ENCODE measurements at regions of chr11 and their contacts with region 1.

Region 1: GRCh38 chr11:11977206-11977938 is 31.1 kb downstream of the DKK3 start:
- DNase-seq: peak; percentile 45
- ATAC-seq: peak; percentile 86
- H3K4me3 ChIP-seq: peak overlapping the region in 1 of 2 experiments; percentile 44; a peak in 3 of 4 replicates
- H3K27ac ChIP-seq: peak overlapping the region; percentile 60
- H3K4me1 ChIP-seq: peaks cover 25 to 44% of the 10 kb centered on the region in 2 experiments
- H3K27me3 ChIP-seq: no peaks in the 10 kb centered on the region
- CTCF ChIP-seq: no peak
- POLR2A ChIP-seq: no peak
- RAD21 ChIP-seq: no peak

Region 2: DNA sequence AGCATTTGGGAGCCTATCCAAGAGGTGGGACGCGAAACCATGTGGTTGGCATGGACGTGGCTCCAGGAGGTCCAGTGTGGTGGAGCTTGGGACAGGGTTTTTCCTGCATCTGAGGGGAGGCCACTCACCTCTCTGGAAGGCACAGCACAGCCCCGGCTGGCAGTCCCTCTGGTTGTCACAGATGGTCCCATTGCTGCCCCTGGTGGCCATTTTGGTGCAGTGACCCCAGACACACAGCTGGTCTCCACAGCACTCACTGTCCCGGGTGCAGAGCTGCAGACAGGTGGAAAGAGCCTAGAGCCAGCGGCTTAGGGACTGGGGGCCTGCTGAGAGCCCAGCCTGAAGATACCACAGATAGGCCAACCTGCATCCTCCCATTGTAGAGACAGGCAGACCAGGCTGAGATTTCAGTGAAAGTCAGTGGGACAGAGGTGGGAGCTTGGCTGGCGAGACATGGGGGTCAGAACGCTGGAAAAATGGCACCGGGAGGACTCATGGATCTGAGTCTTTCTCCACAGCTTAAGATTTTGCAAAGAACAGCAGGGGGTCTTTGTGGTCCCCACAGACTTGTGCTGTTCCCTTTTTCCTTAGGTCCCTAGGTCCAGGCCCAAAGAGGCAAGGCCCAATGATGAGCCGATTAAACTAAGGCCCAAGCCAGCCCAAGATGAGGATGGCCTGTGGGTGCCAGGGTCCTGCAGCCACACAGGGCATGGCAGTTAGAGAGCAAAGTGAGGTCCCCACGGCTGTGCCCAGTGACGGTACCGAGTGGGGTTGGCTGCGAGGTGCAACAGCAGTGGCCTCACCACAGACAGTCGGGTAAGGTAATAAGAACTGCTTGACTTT is 10.3 kb before region 1 on chr11:
- CTCF ChIA-PET with region 1: interaction called, 21 read pairs
- POLR2A ChIA-PET with region 1: no interaction called
- RAD21 ChIA-PET with region 1: interaction called in 1 of 2 experiments, 3 read pairs
- intact Hi-C with region 1: no loop called
- DNase-seq: peak; percentile 49
- ATAC-seq: peak; percentile 100
- H3K4me3 ChIP-seq: no peak overlapping the region
- H3K27ac ChIP-seq: no peak overlapping the region
- H3K4me1 ChIP-seq: peaks cover 0 to 7% of the 10 kb centered on the region in 2 experiments; a peak in 1 of 4 replicates
- H3K27me3 ChIP-seq: no peaks in the 10 kb centered on the region
- CTCF ChIP-seq: peak; percentile 50 to 95 (median 89); a peak in 5 of 6 replicates
- POLR2A ChIP-seq: no peak
- RAD21 ChIP-seq: peak; percentile 67

Region 3: GRCh38 chr11:12159351-12160099 is 182.2 kb after region 1 on chr11:
- CTCF ChIA-PET with region 1: no interaction called
- POLR2A ChIA-PET with region 1: no interaction called
- RAD21 ChIA-PET with region 1: no interaction called
- intact Hi-C with region 1: no loop called
- DNase-seq: no peak
- ATAC-seq: no peak
- H3K4me3 ChIP-seq: no peak overlapping the region
- H3K27ac ChIP-seq: no peak overlapping the region
- H3K4me1 ChIP-seq: peaks cover 29 to 61% of the 10 kb centered on the region in 2 experiments
- H3K27me3 ChIP-seq: no peaks in the 10 kb centered on the region
- CTCF ChIP-seq: peak in 1 of 3 experiments; percentile 33; a peak in 1 of 6 replicates
- POLR2A ChIP-seq: no peak
- RAD21 ChIP-seq: peak; percentile 64